Mammary epithelial cell (primary cell): ENCODE measurements at regions of chr12 and their contacts with region 1.

Region 1: DNA sequence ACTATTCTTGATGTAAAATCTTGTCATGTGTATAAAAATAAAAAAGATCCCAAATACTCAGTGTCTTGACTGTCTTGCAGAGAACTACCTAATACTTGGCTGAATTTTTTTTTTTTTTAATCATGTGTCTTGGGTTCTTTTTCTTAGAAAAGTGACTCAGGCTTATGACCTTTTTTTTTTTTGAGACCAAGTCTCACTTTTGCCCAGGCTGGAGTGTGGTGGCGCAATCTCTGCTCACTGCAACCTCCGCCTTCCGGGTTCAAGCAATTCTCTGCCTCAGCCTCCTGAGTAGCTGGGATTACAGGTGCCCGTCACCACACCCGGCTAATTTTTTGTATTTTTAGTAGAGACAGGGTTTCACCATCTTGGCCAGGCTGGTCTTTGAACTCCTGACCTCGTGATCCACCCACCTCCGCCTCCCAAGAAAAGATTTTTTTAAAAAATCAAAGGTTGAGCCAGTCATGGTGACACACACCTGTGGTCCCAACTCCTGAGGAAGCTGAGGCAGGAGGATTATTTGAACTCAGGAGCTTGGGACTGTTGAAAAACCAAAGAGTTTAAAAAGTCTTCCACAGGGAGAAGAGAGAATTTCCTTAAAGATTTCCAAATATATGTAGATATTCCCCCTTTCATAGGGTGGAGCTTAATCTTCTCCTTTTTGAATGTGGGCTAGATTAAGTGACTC is 17.7 kb upstream of the TDG start:
- DNase-seq: no peak
- H3K4me3 ChIP-seq: no peak overlapping the region
- H3K27ac ChIP-seq: no peak overlapping the region
- H3K4me1 ChIP-seq: no peaks in the 10 kb centered on the region
- H3K27me3 ChIP-seq: no peaks in the 10 kb centered on the region
- CTCF ChIP-seq: no peak

Region 2: GRCh38 chr12:103379670-103380069 is 568.3 kb before region 1 on chr12:
- CTCF ChIA-PET with region 1: no interaction called
- dilution Hi-C with region 1: no loop called
- in situ Hi-C with region 1: no loop called
- intact Hi-C with region 1: no loop called
- DNase-seq: no peak
- H3K4me3 ChIP-seq: no peak overlapping the region
- H3K27ac ChIP-seq: no peak overlapping the region
- H3K4me1 ChIP-seq: no peaks in the 10 kb centered on the region
- H3K27me3 ChIP-seq: no peaks in the 10 kb centered on the region
- CTCF ChIP-seq: no peak

Region 3: DNA sequence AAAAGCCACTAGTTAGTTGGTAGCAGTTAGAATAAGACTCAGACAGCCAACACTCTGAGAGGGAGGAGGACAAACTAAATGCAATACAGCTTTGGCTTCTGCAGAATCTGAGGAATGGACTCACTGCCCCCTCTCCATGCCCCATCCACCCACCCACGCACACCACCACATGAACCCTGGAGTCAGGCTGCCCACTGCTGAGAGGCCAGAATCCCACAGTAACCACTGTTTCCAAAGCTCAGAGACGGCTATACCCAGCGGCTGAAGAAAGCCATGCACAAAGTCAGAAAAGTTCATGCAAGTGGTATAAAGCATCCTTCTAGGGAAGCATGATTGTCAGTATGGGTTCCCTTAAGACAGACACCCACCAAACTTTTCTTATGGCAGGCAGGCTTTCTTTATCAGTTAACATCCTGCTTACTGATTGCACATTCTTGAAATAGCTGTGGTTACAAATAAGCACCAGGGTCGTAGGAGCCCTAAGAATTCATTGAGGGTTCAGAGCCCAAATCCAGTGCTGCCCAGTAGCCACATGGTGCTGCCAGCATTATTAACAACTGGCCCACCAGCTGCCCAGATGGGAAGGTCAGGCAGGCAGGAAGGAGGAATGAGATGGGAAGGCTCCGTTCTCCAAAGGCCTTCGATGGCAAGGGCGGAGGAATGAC is 168.5 kb before region 1 on chr12:
- CTCF ChIA-PET with region 1: no interaction called
- dilution Hi-C with region 1: no loop called
- in situ Hi-C with region 1: no loop called
- intact Hi-C with region 1: loop called (anchors 10 kb)
- DNase-seq: no peak
- H3K4me3 ChIP-seq: no peak overlapping the region
- H3K27ac ChIP-seq: no peak overlapping the region
- H3K4me1 ChIP-seq: no peaks in the 10 kb centered on the region
- H3K27me3 ChIP-seq: no peaks in the 10 kb centered on the region
- CTCF ChIP-seq: no peak

Region 4: DNA sequence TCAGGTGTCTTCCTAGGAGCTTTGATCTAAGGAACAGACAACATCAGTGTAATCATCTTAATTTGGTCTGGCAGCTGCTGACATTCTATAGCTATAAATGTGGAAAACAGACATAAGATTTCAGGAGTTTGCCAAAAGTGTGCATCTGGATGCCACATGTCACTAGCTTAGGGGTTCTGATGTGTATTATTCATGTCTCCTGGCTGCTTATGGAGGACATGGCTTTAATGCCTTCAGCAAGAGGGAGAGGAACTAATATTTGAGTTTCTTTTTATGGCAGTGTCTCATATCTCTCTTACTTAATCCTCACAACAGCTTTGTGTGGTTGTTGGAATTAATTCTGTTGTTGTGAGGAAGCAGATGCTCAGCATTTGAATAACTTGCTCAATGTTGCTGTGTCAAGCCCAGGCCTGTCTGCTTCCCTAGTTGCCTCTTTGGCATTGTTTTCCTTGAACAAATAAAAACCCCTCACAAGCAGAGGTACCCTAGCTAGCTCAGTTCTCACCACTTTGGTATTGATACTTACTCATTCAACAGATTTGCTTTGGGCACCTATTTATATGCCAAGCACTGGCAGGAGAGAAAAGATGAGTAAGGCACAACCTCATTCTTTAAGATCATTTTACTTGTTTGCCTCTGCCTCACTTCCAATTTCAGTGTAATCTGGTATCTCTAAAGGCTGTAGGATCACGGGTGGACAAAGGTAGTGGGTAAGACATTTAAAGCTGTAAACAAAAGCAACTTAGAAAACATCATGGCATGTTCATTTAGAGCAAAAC is 315.8 kb after region 1 on chr12:
- CTCF ChIA-PET with region 1: no interaction called
- dilution Hi-C with region 1: no loop called
- in situ Hi-C with region 1: no loop called
- intact Hi-C with region 1: no loop called
- DNase-seq: peak; percentile 92
- H3K4me3 ChIP-seq: peak overlapping the region in 1 of 3 experiments; percentile 3
- H3K27ac ChIP-seq: peak overlapping the region; percentile 87
- H3K4me1 ChIP-seq: peaks cover 20% of the 10 kb centered on the region
- H3K27me3 ChIP-seq: no peaks in the 10 kb centered on the region
- CTCF ChIP-seq: no peak